OCI-LY7 (cell line): ENCODE measurements at regions of chr12 and their contacts with region 1.

Region 1: DNA sequence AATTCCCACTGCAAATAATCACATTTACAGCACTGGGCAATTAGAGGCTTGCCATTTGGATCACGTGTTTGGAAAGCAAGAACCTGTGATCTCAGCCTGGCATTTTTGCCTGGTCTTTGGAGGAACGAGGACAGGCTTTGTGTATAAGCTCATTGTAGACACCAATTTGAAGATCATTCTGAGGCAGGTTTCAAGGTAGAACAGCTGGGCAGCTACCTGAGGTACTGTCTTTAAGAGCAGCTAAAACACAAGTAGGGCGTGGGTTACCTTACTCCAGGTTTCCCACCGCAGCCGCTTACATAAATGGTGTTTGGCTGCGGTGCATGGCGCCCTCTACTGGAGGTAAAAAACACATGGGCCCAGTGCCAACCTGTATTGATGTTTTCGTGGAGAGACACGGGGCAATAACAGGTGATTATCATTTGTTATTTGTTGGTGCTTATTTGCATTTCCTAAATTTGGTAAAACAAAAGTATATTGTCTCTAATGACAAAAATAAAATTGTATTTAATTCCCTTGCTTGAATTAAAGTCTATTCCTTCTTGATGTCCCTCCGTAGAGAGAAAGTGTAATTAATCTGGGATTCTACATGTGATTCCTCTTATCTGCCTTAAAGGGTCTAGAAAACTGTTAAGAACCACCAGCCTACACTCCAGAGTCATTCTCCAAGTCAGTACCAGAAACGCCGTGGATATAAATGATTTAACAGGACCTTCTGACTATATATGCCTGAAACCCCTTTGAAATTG is 69.7 kb downstream of the SVOP start:
- DNase-seq: peak; percentile 83
- H3K4me3 ChIP-seq: no peak overlapping the region
- H3K27ac ChIP-seq: no peak overlapping the region
- H3K4me1 ChIP-seq: peaks cover 20% of the 10 kb centered on the region
- CTCF ChIP-seq: peak; percentile 99

Region 2: GRCh38 chr12:108816652-108817335 is 134.4 kb before region 1 on chr12:
- CTCF ChIA-PET with region 1: no interaction called
- POLR2A ChIA-PET with region 1: no interaction called
- intact Hi-C with region 1: loop called (anchors 5 kb)
- DNase-seq: no peak
- H3K4me3 ChIP-seq: no peak overlapping the region
- H3K27ac ChIP-seq: no peak overlapping the region
- H3K4me1 ChIP-seq: peaks cover 6% of the 10 kb centered on the region
- CTCF ChIP-seq: no peak

Region 3: GRCh38 chr12:108884116-108885012 is 66.8 kb before region 1 on chr12:
- CTCF ChIA-PET with region 1: interaction called, 8 read pairs
- POLR2A ChIA-PET with region 1: interaction called, 3 read pairs
- intact Hi-C with region 1: loop called (anchors 1 kb)
- DNase-seq: peak; percentile 72
- H3K4me3 ChIP-seq: no peak overlapping the region
- H3K27ac ChIP-seq: no peak overlapping the region
- H3K4me1 ChIP-seq: no peaks in the 10 kb centered on the region
- CTCF ChIP-seq: peak; percentile 91

Region 4: GRCh38 chr12:110134691-110135411 is 1183.7 kb after region 1 on chr12:
- CTCF ChIA-PET with region 1: no interaction called
- POLR2A ChIA-PET with region 1: no interaction called
- intact Hi-C with region 1: no loop called
- DNase-seq: peak; percentile 33
- H3K4me3 ChIP-seq: no peak overlapping the region
- H3K27ac ChIP-seq: no peak overlapping the region
- H3K4me1 ChIP-seq: peaks cover 11% of the 10 kb centered on the region
- CTCF ChIP-seq: no peak